H1 (cell line): ENCODE measurements at regions of chr20 and their contacts with region 1.

Region 1: GRCh38 chr20:36050436-36051317 is 82.3 kb downstream of the CNBD2 start:
- DNase-seq: peak; percentile 85 to 94
- H3K4me3 ChIP-seq: peak overlapping the region; percentile 68 to 98 (median 74)
- H3K27ac ChIP-seq: peak overlapping the region; percentile 93; the same call in 1 of the 2 replicates
- H3K4me1 ChIP-seq: peaks cover 4 to 10% (median 6%) of the 10 kb centered on the region in 4 experiments; a peak in 6 of 7 replicates
- H3K27me3 ChIP-seq: no peaks in the 10 kb centered on the region
- CTCF ChIP-seq: no peak
- EP300 ChIP-seq: peak in 1 of 2 experiments; percentile 90; a peak in 2 of 3 replicates
- POLR2A ChIP-seq: peak; percentile 98 to 99
- RAD21 ChIP-seq: peak; percentile 3 to 11; a peak in 1 of 4 replicates

Region 2: DNA sequence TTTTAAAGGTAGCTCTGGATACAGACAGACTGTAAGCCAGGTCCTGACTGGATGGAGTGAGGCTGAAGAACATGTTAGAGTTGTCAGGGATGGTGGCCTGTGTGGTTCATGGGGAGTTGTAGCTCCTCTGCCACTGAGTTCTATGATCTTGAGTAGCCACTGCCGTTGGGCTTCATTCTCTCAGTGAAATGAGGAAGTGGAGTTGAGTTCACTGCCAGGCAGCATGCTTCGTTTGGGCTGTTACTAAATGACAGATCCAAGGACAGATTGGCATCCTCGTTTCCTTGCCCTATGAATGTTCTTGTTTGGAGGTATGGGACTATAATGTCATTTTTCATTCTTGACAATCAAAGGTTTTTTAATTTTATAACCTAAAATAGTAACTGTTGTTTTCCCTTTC is 133.6 kb before region 1 on chr20:
- CTCF ChIA-PET with region 1: no interaction called
- POLR2A ChIA-PET with region 1: no interaction called
- DNase-seq: no peak
- H3K4me3 ChIP-seq: no peak overlapping the region
- H3K27ac ChIP-seq: no peak overlapping the region
- H3K4me1 ChIP-seq: no peaks in the 10 kb centered on the region
- H3K27me3 ChIP-seq: no peaks in the 10 kb centered on the region
- CTCF ChIP-seq: no peak
- EP300 ChIP-seq: no peak
- POLR2A ChIP-seq: no peak
- RAD21 ChIP-seq: no peak

Region 3: DNA sequence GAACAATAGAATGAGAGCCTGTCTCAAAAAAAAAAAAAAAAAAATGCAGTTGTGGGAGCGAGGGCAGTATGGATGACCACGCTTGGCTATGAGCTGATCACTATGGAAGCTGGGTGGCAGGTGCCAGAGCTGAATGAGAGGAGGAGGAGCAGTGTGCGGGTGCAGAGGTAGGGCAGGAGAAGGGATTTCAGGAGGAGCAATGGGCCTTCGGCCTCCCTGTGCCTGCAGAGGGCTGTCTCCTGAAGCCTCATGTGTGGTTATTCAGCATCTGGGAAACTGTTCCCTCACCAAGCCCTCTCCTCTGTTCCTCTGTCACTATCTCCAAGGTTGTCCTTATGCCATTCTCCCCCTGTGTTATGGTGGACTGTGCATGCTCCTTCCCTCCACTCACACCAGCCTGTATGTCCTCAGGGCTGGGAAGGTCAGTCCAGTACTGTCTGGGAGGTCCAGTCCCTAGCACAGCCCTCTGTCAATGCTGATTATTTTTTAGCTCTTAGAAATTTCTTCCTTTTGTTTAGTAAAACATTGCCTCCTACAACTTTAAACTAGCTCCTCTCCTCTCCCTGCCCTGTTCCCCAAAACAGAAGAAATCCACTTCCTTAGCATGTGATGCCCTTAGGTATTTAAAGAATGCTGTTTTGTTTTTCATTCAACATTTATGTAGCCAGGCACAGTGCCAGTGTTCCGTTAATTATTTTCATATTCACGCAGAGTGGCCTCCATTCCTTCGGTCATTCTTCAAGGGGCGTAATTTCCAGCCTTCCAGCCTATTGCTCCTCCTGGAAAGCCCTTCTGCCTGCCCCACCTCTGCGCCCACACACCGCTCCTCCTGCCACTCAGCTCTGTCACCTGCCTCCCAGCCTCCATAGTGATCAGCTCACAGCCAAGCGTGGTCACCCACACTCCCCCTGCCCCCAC is 33.4 kb before region 1 on chr20:
- CTCF ChIA-PET with region 1: no interaction called
- POLR2A ChIA-PET with region 1: interaction called, 11 read pairs
- DNase-seq: no peak
- H3K4me3 ChIP-seq: no peak overlapping the region
- H3K27ac ChIP-seq: no peak overlapping the region
- H3K4me1 ChIP-seq: peaks cover 0 to 9% (median 4%) of the 10 kb centered on the region in 4 experiments; a peak in 5 of 7 replicates
- H3K27me3 ChIP-seq: no peaks in the 10 kb centered on the region
- CTCF ChIP-seq: no peak
- EP300 ChIP-seq: no peak
- POLR2A ChIP-seq: no peak
- RAD21 ChIP-seq: no peak

Region 4: DNA sequence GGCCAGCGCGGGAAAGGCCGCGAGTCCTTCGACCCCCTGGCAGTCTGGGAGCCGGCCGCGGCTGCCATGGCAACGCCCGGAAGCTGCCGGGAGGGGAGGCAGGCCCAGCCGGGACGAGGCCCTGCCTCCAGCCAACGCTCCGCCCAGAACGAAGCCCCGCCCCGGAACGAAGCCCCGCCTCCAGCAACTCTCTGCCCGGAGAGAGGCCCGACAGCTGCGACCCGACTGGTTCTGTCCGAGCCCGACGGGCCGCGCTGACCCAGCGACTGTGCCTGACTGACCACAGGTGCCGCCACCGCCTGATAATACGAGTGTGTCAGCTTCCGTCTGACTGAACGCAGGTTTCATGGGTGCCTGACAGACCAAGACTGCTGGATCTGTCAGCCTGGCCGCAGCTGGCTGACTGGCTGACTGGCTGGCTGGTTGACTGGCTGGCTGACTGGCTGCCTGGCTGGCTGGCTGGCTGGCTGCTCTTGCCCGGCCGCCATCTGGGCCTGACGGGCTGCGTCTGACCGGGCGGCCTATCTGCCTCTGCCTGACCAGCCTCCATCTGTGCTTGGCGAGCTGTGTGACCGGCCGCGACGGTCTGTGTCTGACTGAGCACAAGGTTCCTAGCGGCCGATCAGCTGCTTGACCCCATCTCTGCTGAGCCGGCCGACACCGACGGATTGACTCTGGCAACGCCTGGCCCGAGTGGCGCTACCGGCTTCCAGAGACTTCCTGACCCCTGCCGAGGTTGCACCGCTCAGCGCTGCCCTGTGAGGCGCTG is 14.2 kb after region 1 on chr20:
- CTCF ChIA-PET with region 1: no interaction called
- POLR2A ChIA-PET with region 1: interaction called, 16 read pairs
- DNase-seq: peak; percentile 63 to 100
- H3K4me3 ChIP-seq: peak overlapping the region; percentile 54 to 78 (median 68)
- H3K27ac ChIP-seq: no peak overlapping the region
- H3K4me1 ChIP-seq: peaks cover 0 to 17% (median 4%) of the 10 kb centered on the region in 4 experiments; a peak in 5 of 7 replicates
- H3K27me3 ChIP-seq: peaks cover 2 to 24% (median 16%) of the 10 kb centered on the region in 4 experiments; a peak in 6 of 7 replicates
- CTCF ChIP-seq: no peak; a peak in 1 of 4 replicates
- EP300 ChIP-seq: no peak
- POLR2A ChIP-seq: no peak
- RAD21 ChIP-seq: no peak